ENCODE measurements at regions of chr5 and their contacts with region 1.

Region 1: DNA sequence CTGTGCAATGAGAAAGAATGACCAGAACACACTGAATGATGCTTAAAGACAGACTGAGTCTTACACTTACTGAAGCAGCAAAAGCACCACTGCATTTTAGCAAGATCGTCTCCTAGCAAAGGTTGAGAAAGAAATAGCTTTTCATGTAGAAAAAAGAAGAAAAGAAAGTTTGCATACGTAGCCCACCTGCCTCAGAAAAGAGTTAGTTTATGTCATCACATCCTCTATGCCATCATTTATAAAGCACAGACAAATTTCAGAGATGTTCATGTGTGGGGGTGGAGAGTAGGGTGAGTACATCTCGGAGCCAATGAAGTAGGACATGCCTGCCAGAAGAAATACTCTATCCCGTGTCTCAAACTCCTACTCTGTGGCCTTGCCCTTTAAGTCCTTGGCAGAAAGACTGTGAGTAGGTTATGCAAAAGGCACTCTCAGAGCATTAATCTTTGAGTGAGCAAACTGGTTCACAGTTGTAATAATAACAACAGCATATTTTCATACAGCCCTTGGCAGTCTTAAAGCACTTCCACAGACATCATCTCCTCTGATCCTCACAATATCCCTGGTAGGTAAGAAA is 22.4 kb downstream of the NRG2 start:
- DNase-seq: no peak
- ATAC-seq: peak in 3 of 4 donors; percentile 26 to 54 (median 40)
- H3K4me3 ChIP-seq: no peak overlapping the region
- H3K27ac ChIP-seq: peak overlapping the region; percentile 89
- H3K4me1 ChIP-seq: peaks cover 77% of the 10 kb centered on the region
- H3K27me3 ChIP-seq: no peaks in the 10 kb centered on the region
- CTCF ChIP-seq: no peak

Region 2: DNA sequence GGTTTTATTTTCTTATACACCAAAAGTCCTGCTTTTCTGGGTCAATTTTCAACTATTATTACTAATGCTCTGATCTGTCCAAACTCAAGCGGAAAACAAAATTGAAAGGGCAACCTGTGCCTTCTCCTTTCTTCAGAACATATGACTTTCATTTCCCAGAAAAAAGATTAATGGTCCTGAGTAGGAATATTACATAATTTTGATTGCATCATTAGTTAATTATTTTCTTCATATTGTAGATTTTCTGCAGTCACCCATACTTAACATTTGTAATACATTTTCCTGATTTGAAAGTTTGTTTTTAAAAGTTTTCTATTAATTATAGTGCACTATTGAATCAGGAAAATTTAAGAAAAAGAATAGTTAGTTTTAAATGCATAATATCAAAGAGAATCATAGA is 1155.2 kb after region 1 on chr5:
- intact Hi-C with region 1: loop called in 1 of 2 experiments (anchors 5 kb)
- DNase-seq: no peak
- ATAC-seq: no peak
- H3K4me3 ChIP-seq: no peak overlapping the region
- H3K27ac ChIP-seq: no peak overlapping the region
- H3K4me1 ChIP-seq: no peaks in the 10 kb centered on the region
- H3K27me3 ChIP-seq: peaks cover 0 to 55% (median 7%) of the 10 kb centered on the region in 3 donors
- CTCF ChIP-seq: no peak